Heart left ventricle (tissue), 16 donors: ENCODE measurements at regions of chr12 and their contacts with region 1.

Region 1: DNA sequence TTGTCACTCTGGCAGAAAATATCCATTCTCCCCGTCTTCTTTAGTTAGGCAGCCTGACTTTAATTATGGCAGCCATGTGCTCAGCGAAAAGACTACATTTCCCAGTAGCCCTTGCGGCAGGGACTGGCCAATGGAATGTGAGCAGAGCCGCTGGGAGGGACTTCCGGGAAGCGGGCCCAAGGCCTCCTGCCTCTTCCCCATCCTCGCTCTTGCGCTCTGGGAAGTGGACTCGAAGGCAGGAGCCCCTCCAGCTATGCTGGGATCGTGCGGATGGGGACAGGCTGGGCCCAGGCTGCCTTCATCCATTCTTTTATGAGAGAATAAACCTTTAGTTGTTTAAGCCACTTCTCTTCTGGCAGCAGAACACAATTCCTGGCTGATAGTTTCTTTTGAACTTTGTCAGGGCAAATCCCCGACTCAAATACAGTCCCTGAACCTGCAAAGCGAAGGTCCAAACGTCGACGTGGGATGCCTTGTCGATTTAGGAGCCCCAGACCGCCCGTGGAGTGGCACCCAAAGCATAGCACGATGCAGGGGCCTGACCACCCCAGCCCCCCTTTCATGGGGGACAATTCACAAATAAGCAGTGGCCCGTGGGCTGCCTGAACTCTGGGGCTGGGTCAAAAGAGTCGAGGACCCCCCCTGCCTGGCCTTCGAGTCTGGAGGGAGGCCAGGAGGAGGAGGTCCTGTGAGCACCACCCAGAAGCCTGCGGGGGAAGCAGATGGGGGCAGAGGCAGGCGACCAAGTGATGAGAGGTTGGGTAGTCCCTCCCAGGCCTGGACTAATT is 15.6 kb upstream of the LRTM2 start:
- DNase-seq: peak; percentile 91 to 94 (median 92)
- ATAC-seq: peak; percentile 80 to 91 (median 84)
- H3K4me3 ChIP-seq: no peak overlapping the region
- H3K27ac ChIP-seq: peak overlapping the region in 6 of 12 donors; percentile 43 to 73 (median 56)
- H3K4me1 ChIP-seq: peaks cover 0 to 31% (median 16%) of the 10 kb centered on the region in 12 donors
- H3K27me3 ChIP-seq: no peaks in the 10 kb centered on the region
- CTCF ChIP-seq: no peak
- POLR2A ChIP-seq: no peak

Region 2: DNA sequence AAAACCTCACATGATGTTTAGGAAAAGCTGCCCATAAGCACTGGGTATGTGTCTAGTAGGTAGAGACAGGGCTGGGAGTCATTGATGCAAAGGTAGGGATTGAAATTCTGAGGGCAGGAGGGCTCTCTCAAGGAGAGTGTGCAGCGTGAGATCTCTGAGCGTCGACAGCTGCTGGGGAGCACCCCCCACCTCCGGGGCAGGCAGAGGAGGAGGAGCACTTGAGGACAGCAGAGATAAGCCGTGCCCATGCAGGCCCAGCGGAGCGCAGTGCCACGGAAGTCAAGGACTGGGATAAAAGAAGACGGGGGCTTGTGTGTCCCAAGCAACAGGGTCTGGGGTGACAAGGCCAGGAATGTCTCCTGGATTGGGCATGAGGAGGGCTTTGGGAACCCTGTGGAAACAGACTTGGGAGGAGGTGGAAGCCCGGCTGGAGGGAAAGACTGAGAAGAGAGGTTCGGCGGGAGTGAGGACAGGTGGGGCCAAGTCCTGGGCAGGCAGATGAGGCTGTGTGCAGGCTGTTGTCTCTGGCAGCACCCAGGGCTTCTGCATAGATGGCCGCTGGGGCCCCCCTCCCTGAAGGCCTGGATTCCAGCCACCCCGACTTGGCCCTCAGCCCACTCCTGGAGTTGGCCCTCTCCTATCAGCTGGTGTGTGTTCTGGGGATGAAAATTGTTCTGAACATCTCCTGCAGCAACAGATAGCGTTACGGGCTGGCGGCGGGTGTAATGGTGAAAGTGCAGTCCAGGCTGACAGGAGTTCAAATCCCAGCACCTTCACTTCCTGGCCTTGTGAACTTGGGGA is 111.8 kb after region 1 on chr12:
- intact Hi-C with region 1: loop called in 1 of 10 experiments (anchors 5 kb)
- DNase-seq: peak; percentile 73 to 82 (median 75)
- ATAC-seq: peak; percentile 73 to 89 (median 77)
- H3K4me3 ChIP-seq: no peak overlapping the region
- H3K27ac ChIP-seq: peak overlapping the region in 1 of 12 donors; percentile 22
- H3K4me1 ChIP-seq: peaks cover 0 to 16% (median 8%) of the 10 kb centered on the region in 12 donors
- H3K27me3 ChIP-seq: no peaks in the 10 kb centered on the region
- CTCF ChIP-seq: no peak
- POLR2A ChIP-seq: no peak

Region 3: GRCh38 chr12:1949771-1950470 is 145.2 kb after region 1 on chr12:
- intact Hi-C with region 1: no loop called
- DNase-seq: no peak
- ATAC-seq: peak in 3 of 4 donors; percentile 63 to 81 (median 73)
- H3K4me3 ChIP-seq: no peak overlapping the region
- H3K27ac ChIP-seq: peak overlapping the region in 9 of 12 donors; percentile 17 to 83 (median 42)
- H3K4me1 ChIP-seq: peaks cover 0 to 10% (median 0%) of the 10 kb centered on the region in 12 donors
- H3K27me3 ChIP-seq: no peaks in the 10 kb centered on the region
- CTCF ChIP-seq: no peak
- POLR2A ChIP-seq: no peak

Region 4: DNA sequence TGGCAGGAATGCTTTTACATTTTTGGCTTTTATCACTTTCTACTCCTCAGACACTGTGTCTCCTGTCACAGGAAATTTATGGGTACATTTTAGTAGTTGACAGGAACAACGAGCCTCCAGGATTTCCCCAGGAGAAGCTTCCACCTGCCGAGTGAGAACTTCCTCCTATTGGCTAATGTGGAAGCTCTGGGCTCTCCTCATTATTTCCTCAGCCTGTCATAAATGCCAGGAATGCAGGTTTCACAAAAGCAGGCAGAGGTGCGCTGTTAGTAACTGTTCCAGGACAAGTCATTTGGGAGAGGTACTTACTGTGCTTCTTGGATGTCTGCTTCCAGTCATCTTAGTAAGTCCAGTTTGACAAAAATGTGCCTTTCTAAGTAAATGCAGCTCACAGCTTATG is 218.6 kb after region 1 on chr12:
- intact Hi-C with region 1: loop called in 2 of 10 experiments (anchors 5 to 10 kb)
- DNase-seq: no peak
- ATAC-seq: no peak
- H3K4me3 ChIP-seq: no peak overlapping the region
- H3K27ac ChIP-seq: peak overlapping the region in 1 of 12 donors; percentile 3
- H3K4me1 ChIP-seq: peaks cover 0 to 63% (median 18%) of the 10 kb centered on the region in 12 donors
- H3K27me3 ChIP-seq: no peaks in the 10 kb centered on the region
- CTCF ChIP-seq: no peak
- POLR2A ChIP-seq: no peak